Panc1 (cell line): ENCODE measurements at regions of chr16 and their contacts with region 1.

Region 1: GRCh38 chr16:74666425-74667254 is at the start of gene RFWD3:
- DNase-seq: peak; percentile 81
- ATAC-seq: peak; percentile 100
- H3K4me3 ChIP-seq: peak within 1 kb of the TSS; percentile 80 to 84
- H3K27ac ChIP-seq: peak within 1 kb of the TSS; percentile 93
- H3K4me1 ChIP-seq: no peaks in the 10 kb centered on the region; the same call in 1 of the 2 replicates
- H3K27me3 ChIP-seq: no peaks in the 10 kb centered on the region
- CTCF ChIP-seq: no peak
- total RNA-seq, gene RFWD3: 53.7 TPM

Region 2: DNA sequence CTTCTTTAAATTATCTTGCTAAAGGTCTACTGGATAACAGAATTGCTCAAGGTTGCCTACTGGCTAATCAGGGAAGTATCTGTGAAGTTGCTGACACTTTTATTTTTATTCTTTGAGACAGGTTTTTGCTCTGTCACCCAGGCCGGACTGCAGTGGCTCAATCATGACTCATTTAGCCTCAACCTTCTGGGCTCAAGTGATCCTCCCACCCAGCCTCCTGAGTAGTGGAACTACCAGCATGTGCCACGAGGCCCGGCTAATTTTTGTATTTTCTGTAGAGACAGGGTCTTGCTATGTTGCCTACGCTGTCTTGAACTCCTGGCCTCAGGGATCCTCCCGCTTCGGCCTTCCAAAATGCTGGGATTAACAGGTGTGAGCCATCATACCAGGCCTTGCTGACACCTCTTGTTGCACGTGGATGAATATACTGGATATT is 102.8 kb before region 1 on chr16:
- CTCF ChIA-PET with region 1: no interaction called
- POLR2A ChIA-PET with region 1: interaction called, 16 read pairs
- in situ Hi-C with region 1: no loop called
- intact Hi-C with region 1: no loop called
- DNase-seq: no peak
- ATAC-seq: no peak
- H3K4me3 ChIP-seq: no peak overlapping the region
- H3K27ac ChIP-seq: no peak overlapping the region
- H3K4me1 ChIP-seq: no peaks in the 10 kb centered on the region; the same call in 1 of the 2 replicates
- H3K27me3 ChIP-seq: no peaks in the 10 kb centered on the region
- CTCF ChIP-seq: no peak

Region 3: GRCh38 chr16:74650966-74651567 is 15.6 kb before region 1 on chr16:
- CTCF ChIA-PET with region 1: no interaction called
- POLR2A ChIA-PET with region 1: interaction called, 13 read pairs
- in situ Hi-C with region 1: no loop called
- intact Hi-C with region 1: no loop called
- DNase-seq: no peak
- ATAC-seq: no peak
- H3K4me3 ChIP-seq: no peak overlapping the region
- H3K27ac ChIP-seq: no peak overlapping the region
- H3K4me1 ChIP-seq: no peaks in the 10 kb centered on the region
- H3K27me3 ChIP-seq: no peaks in the 10 kb centered on the region
- CTCF ChIP-seq: peak; percentile 67

Region 4: GRCh38 chr16:74684131-74684530 is 17.5 kb after region 1 on chr16:
- CTCF ChIA-PET with region 1: no interaction called
- POLR2A ChIA-PET with region 1: interaction called, 11 read pairs
- in situ Hi-C with region 1: no loop called
- intact Hi-C with region 1: no loop called
- DNase-seq: no peak
- ATAC-seq: no peak
- H3K4me3 ChIP-seq: no peak overlapping the region
- H3K27ac ChIP-seq: no peak overlapping the region
- H3K4me1 ChIP-seq: no peaks in the 10 kb centered on the region; the same call in 1 of the 2 replicates
- H3K27me3 ChIP-seq: no peaks in the 10 kb centered on the region
- CTCF ChIP-seq: no peak

Region 5: DNA sequence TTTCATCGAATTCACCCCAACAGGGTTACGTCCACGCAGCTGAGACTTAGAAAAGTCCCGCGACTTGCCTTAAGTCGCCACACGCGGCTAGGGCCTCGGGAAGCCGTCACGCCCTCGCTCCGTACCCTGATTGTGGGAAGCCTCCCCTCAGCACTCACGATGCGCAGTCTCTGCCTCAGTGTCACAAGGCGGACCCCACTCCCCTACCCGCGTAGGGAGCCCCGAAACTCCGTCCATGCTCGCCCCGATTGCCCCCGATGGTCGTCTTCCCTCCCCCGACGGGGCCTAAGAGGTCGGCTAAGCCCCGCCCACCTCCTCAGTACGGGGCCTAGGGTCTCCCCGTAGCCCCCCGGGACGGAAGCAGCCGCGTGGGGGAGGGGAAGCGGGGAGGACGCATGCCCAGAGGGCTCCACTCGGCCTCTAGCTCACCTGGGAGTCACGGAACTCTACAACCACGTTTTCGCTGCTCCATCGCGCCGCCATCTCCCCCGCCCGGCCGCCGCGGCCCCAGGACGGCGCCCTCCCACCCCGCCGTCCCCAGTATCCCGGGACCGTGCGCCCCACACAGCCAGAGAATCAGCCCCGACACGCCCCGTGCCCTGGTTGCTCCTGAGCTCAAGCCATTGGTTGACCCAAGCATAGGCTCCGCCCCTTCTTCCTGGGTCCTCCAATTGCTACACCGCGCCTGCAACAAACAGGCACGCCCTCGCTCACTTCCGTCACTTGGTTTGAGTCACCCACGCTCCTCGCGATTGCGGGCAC is 318.1 kb after region 1 on chr16 and contains the start of gene WDR59:
- CTCF ChIA-PET with region 1: no interaction called
- POLR2A ChIA-PET with region 1: interaction called, 17 read pairs
- in situ Hi-C with region 1: no loop called
- intact Hi-C with region 1: no loop called
- DNase-seq: peak; percentile 94
- ATAC-seq: peak; percentile 100
- H3K4me3 ChIP-seq: peak within 1 kb of the TSS; percentile 88 to 93
- H3K27ac ChIP-seq: peak within 1 kb of the TSS; percentile 79
- H3K4me1 ChIP-seq: no peaks in the 10 kb centered on the region
- H3K27me3 ChIP-seq: no peaks in the 10 kb centered on the region
- CTCF ChIP-seq: no peak
- total RNA-seq, gene WDR59: 58.7 TPM

Region 6: GRCh38 chr16:75053791-75054555 is 387.3 kb after region 1 on chr16:
- CTCF ChIA-PET with region 1: no interaction called
- POLR2A ChIA-PET with region 1: interaction called, 13 read pairs
- in situ Hi-C with region 1: no loop called
- intact Hi-C with region 1: no loop called
- DNase-seq: no peak
- ATAC-seq: no peak
- H3K4me3 ChIP-seq: no peak overlapping the region
- H3K27ac ChIP-seq: no peak overlapping the region
- H3K4me1 ChIP-seq: peaks cover 10% of the 10 kb centered on the region
- H3K27me3 ChIP-seq: no peaks in the 10 kb centered on the region
- CTCF ChIP-seq: no peak